Activated naive CD4-positive, alpha-beta T cell treated with anti-CD3 and anti-CD28 coated beads for 36 hours (primary cell): ENCODE measurements at regions of chr12 and their contacts with region 1.

Region 1: DNA sequence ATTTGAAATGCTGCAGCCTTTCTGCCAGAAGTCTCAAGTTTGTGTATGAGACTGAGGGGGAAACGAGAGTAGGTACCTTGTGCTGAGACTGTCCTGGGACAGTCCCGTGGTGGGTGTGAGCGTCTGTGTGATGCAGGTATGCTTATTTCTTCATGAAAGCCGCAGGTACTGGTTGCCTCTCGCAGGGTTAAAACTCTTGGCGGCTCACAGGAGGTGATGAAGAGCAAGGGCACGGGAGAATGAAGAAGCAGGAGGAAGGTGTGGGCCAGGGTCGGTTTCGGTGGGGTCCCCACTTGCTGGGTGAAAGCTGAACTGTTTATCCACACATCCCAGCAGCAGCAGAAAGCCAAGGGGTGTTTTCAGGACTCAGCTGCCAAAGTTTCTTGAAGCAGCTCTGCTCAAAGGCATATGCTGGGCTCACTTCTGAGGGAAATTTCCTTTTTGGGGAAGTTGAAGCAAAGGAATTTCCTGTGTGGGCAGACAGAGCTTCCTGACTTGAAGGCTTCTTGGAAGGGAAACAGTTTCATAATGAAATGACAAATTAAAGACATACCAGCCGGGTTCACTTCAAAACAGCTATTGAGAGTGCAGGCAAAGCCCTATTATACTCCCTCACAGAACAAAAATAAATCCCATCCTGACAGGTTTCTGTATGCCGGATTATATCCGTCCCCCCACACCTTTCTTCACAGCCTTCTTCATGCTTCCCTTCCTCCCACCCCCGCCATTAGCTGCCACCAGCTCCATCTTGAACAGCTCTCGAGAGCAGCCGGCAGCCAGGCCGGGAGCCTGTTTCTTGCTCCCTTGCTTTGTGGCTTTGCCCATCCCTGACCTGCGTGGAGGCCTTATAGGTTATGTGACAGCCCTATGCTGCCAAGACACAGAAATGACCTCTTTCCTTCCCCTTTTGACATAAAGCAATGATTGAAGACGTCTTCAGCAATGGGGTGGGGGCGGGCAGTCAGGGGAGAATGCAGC is 116.6 kb downstream of the ETV6 start:
- DNase-seq: peak; percentile 92
- H3K4me3 Mint-ChIP-seq: peak overlapping the region; percentile 43
- H3K27ac Mint-ChIP-seq: peak overlapping the region; percentile 92
- H3K4me1 Mint-ChIP-seq: peaks cover 99% of the 10 kb centered on the region
- H3K27me3 Mint-ChIP-seq: no peaks in the 10 kb centered on the region

Region 2: DNA sequence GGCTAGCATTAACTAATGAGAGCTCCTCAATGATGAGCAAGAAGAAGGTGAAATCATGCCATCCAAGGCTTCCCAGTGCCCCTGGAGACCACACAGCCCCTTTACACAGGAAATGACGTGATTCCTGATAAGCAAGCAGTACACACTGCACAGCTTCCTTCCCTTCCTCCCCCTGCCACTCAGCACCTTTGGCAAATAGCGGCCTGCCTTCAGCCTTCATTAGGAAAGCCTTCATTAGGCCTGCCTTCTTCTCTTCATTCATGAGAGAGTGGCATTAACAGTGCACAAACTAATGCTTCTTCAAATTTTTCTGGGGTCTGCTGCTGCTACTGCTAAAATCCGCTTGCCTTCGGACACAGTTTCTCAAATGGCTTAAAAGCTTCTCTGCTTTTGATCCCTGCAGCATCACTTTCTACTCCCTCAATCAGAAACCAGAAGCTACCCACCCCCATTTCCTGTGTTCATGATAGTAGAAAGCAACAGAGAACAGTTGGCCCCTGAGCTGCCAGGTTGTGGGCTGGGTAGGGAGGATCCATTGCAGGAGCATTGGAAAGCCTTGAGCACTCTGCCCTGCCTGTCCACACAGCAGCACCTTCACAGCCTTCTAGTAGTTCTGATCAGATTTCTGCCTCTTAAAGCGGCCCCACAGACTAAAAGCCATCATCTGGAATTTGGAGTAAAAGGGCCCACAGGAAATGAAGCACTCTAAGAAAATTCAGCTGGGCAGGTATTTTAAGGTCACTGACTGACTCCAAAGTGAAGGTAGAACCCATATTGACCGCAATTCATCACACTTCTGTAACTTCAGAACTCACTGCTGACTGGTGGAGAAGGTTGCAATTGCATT is 220.4 kb before region 1 on chr12:
- CTCF ChIA-PET with region 1: no interaction called
- intact Hi-C with region 1: loop called (anchors 5 kb)
- DNase-seq: peak; percentile 60
- H3K4me3 Mint-ChIP-seq: peak overlapping the region; percentile 26
- H3K27ac Mint-ChIP-seq: peak overlapping the region; percentile 81
- H3K4me1 Mint-ChIP-seq: peaks cover 55% of the 10 kb centered on the region
- H3K27me3 Mint-ChIP-seq: no peaks in the 10 kb centered on the region

Region 3: DNA sequence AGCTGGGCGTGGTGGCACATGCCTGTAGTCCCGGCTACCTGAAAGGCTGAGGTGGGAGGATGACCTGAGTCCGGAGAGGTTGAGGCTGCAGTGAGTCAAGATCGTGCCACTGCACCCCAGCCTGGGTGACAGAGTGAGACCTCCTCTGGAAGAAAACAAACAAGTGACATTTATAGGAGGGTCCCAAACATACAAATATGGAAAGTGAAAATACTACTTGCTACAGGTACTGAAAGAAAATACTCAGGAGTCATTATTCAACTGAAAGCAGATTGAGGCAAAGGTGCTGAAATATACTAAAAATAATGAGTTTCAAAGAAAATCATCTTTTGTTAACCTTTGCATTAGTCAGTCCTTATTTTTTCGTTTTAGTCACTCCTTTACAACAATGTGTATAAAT is 63.1 kb before region 1 on chr12:
- CTCF ChIA-PET with region 1: no interaction called
- intact Hi-C with region 1: loop called (anchors 1 kb)
- DNase-seq: peak; percentile 14
- H3K4me3 Mint-ChIP-seq: no peak overlapping the region
- H3K27ac Mint-ChIP-seq: peak overlapping the region; percentile 76
- H3K4me1 Mint-ChIP-seq: peaks cover 49% of the 10 kb centered on the region
- H3K27me3 Mint-ChIP-seq: no peaks in the 10 kb centered on the region

Region 4: DNA sequence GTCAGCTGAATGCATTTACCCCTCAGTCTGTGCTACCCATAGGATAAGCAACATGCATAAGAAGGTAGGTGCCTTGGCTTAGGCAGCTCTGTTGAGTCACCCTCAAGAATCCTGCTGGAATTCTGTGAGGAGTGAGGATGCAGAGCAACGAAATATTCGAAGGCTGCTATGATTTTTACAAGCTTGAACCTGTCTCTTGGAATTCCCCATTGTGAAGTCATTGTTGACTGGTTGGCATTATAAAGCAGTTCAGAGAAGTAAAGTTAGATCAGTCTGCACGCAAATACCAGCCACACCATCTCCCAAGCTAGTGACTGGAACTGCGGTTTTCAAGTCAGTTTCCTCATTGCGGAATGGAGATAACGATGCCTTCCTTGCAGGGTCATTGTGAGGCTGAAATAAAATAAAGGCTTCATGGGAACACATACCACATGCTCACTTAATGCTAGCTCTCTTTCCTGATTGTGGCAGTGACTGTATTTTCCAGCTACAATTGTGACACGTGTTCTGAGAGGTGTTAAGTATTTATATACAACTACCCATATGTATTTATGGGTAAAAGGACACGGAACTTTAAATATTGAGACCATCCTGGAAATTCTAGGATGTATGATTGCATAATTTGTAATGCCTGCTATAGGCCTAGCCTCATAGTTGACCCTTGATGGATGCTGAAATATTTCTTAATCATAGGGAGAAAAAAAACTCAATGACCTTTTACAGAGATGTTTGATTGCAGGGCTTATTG is 19.9 kb before region 1 on chr12:
- CTCF ChIA-PET with region 1: interaction called, 7 read pairs
- intact Hi-C with region 1: loop called (anchors 2 kb)
- DNase-seq: peak; percentile 22
- H3K4me3 Mint-ChIP-seq: no peak overlapping the region
- H3K27ac Mint-ChIP-seq: no peak overlapping the region
- H3K4me1 Mint-ChIP-seq: peaks cover 40% of the 10 kb centered on the region
- H3K27me3 Mint-ChIP-seq: no peaks in the 10 kb centered on the region

Region 5: GRCh38 chr12:11836282-11837151 is 70.4 kb after region 1 on chr12:
- CTCF ChIA-PET with region 1: interaction called, 3 read pairs
- intact Hi-C with region 1: loop called (anchors 1 kb)
- DNase-seq: peak; percentile 92
- H3K4me3 Mint-ChIP-seq: no peak overlapping the region
- H3K27ac Mint-ChIP-seq: peak overlapping the region; percentile 97
- H3K4me1 Mint-ChIP-seq: peaks cover 68% of the 10 kb centered on the region
- H3K27me3 Mint-ChIP-seq: no peaks in the 10 kb centered on the region

Region 6: DNA sequence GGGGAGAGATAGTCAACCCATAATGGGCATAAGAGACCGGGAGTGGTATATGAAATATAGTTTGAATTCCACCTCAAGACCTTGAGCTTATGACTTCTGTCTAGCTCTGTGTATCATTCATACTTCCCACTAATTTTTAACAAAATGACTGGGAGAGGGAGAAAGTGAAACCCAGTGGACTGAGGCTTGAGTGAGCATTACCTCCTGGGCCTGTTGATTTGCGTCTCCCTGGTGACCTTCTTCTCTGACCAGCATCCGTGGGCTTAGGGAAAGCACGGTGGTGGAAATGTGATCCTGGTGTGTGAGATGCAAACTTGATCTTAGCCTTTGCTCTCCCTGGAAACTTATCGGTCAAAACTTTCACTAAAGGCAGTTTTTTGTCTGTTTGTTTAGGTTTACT is 96.7 kb after region 1 on chr12:
- CTCF ChIA-PET with region 1: no interaction called
- intact Hi-C with region 1: no loop called
- DNase-seq: no peak
- H3K4me3 Mint-ChIP-seq: no peak overlapping the region
- H3K27ac Mint-ChIP-seq: no peak overlapping the region
- H3K4me1 Mint-ChIP-seq: peaks cover 24% of the 10 kb centered on the region
- H3K27me3 Mint-ChIP-seq: no peaks in the 10 kb centered on the region

Region 7: GRCh38 chr12:11958221-11959091 is 192.3 kb after region 1 on chr12:
- CTCF ChIA-PET with region 1: interaction called, 4 read pairs
- intact Hi-C with region 1: loop called (anchors 1 kb)
- DNase-seq: peak; percentile 84
- H3K4me3 Mint-ChIP-seq: peak overlapping the region; percentile 32
- H3K27ac Mint-ChIP-seq: peak overlapping the region; percentile 73
- H3K4me1 Mint-ChIP-seq: peaks cover 32% of the 10 kb centered on the region
- H3K27me3 Mint-ChIP-seq: peaks cover 11% of the 10 kb centered on the region

Region 8: DNA sequence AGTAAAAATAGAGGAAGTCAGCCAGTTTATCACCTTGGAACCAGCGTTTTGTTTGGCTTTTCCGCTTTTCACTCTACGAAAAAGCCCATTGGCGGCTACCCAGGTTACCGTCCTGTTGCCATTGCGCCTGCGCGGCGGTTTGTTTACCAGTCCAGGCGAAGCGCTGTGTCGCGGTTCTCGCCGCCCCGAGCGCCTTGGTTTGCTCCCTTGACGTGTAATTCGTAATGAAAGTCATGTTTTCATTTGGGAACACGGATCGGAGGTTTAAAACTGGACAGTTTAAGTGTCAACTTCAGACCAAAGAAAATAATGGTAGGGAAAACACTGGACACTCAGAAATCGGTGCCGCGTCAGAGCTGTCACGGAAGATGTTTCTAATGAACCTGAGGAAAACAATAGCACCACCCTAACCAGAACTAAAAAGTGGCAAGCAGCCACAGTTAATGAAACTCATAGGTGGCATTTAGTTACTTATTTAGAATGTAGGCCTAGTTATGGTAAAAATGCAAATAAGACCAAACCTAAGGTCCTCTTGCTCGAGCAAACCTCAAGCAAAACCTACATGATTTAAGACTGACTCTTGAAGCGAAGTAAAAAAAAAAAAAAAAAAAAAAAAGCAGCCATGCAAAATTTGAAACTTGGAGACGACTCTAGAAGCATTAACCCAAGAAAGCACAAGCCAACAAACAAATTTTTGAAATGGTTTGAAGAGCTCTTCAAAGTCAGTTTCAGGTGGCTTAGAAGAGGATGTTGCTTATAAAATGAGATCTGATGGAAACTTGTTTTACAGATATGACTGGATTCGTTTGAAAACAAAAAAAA is 930.7 kb after region 1 on chr12:
- CTCF ChIA-PET with region 1: no interaction called
- intact Hi-C with region 1: loop called (anchors 10 kb)
- DNase-seq: peak; percentile 93
- H3K4me3 Mint-ChIP-seq: peak overlapping the region; percentile 97
- H3K27ac Mint-ChIP-seq: peak overlapping the region; percentile 98
- H3K4me1 Mint-ChIP-seq: peaks cover 38% of the 10 kb centered on the region
- H3K27me3 Mint-ChIP-seq: no peaks in the 10 kb centered on the region